Naive thymus-derived CD4-positive, alpha-beta T cell (primary cell): ENCODE measurements at regions of chr3 and their contacts with region 1.

Region 1: DNA sequence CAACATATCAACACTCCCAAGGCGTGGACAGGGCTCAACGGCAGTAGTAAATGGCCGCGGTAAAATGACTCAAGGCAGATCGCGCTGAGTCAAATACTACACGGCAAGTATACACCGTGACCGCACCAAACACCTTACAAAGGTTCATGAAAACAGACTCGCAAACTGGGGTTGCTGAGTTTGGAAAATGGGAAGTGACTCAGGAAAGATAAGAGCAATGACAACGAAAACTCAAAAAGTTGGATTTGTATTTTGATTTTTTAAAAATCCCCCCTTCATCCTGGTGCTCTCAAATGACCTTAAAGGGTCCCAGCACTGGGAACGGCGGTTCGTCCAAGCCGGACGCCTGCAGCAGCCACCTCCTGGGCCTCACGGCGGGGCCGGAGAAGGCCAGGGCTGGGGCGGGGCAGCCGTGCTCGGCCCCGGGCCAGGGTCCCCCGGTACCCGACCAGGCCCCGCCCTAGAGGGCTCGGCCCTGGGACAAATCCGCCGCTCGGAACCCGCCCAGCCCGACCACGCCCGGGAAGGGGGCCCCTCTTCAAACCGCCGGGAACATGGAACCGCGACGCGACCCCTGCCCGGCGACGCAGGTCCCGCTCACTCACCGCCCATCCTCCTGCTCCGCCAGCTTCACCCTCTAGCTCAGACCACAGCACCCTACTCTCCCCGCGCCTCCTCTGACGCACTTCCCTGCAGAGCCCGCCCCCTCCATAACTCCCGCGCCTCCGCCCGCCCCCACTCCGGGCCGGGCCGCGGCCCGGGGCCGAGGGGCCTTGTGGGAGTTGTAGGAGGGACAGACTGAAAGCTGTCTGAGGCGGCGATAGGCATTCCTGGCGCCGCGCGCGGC is at the start of gene CLDND1:
- DNase-seq: peak; percentile 88 to 94 (median 93)
- ATAC-seq: peak; percentile 99
- H3K4me3 ChIP-seq: peak within 1 kb of the TSS; percentile 68
- H3K4me3 Mint-ChIP-seq: peak within 1 kb of the TSS; percentile 83 to 99 (median 92)
- H3K27ac ChIP-seq: peak within 1 kb of the TSS; percentile 90
- H3K27ac Mint-ChIP-seq: peak within 1 kb of the TSS; percentile 67 to 99 (median 96)
- H3K4me1 ChIP-seq: peaks cover 16 to 27% of the 10 kb centered on the region in 2 donors
- H3K4me1 Mint-ChIP-seq: peaks cover 31 to 62% (median 53%) of the 10 kb centered on the region in 7 donors
- H3K27me3 ChIP-seq: no peaks in the 10 kb centered on the region
- H3K27me3 Mint-ChIP-seq: no peaks in the 10 kb centered on the region
- total RNA-seq, gene CLDND1: 100 to 478 (median 132) TPM

Region 2: DNA sequence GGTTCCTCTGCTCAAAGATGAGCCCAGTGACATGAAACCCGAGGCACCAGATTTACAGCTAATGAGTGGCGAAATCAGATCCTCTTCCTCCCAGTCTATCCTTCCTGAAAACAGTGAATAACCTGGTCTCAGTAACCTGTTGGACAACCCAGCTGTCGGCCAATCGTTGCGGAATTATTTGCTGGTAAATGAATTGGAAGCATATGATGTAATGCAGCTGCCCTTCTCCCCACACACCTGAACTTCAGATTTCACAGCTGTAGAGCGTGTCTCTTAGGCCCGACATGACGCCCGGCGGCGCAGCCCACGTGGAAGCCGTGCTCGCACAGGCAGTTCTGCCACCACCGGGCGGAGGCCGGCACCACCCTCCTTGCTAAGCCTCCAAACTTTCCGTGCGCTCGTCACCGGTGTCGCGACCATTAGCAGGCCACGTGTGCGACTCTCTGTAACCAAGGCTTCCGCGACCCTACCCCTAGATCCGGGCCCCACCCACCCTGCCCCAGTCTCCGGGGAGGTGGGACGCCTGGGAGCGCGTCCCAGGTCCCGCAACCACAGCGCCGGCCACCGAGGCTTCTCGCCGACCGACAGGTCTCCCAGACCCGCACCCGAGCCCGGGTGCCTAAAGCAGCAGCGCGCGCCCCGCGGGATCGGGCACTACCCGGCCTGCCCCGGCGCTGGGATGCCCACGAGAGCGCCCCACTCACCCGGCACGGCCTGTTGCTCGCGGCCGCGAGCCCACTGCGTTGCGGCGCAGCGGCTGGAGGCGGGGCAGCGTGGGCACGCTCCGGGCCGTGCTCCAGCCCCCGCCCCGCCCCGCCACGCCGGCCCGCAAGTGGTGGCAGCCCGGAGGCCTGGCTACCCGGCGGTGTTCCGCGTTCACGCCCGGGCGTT is 550.5 kb before region 1 on chr3 and contains the start of gene RIOX2:
- CTCF ChIA-PET with region 1: no interaction called
- POLR2A ChIA-PET with region 1: no interaction called
- intact Hi-C with region 1: loop called in 1 of 2 experiments (anchors 2 kb)
- DNase-seq: peak; percentile 62 to 82 (median 77)
- ATAC-seq: peak; percentile 94
- H3K4me3 ChIP-seq: peak within 1 kb of the TSS; percentile 57
- H3K4me3 Mint-ChIP-seq: peak within 1 kb of the TSS; percentile 78 to 97 (median 93)
- H3K27ac ChIP-seq: peak within 1 kb of the TSS; percentile 74
- H3K27ac Mint-ChIP-seq: peak within 1 kb of the TSS; percentile 84 to 96 (median 90)
- H3K4me1 ChIP-seq: peaks cover 9 to 24% of the 10 kb centered on the region in 2 donors
- H3K4me1 Mint-ChIP-seq: peaks cover 42 to 85% (median 70%) of the 10 kb centered on the region in 7 donors
- H3K27me3 ChIP-seq: no peaks in the 10 kb centered on the region
- H3K27me3 Mint-ChIP-seq: no peaks in the 10 kb centered on the region
- total RNA-seq, gene RIOX2: 17.8 to 110 (median 28.4) TPM

Region 3: GRCh38 chr3:98540346-98540745 is 17.9 kb after region 1 on chr3:
- CTCF ChIA-PET with region 1: no interaction called
- POLR2A ChIA-PET with region 1: interaction called, 4 read pairs
- intact Hi-C with region 1: loop called in 1 of 2 experiments (anchors 1 kb)
- DNase-seq: no peak
- ATAC-seq: no peak
- H3K4me3 ChIP-seq: no peak overlapping the region
- H3K4me3 Mint-ChIP-seq: peak overlapping the region in 1 of 10 donors; percentile 49
- H3K27ac ChIP-seq: no peak overlapping the region
- H3K27ac Mint-ChIP-seq: peak overlapping the region in 1 of 9 donors; percentile 75
- H3K4me1 ChIP-seq: peaks cover 0 to 12% of the 10 kb centered on the region in 2 donors
- H3K4me1 Mint-ChIP-seq: peaks cover 0 to 64% (median 0%) of the 10 kb centered on the region in 7 donors
- H3K27me3 ChIP-seq: no peaks in the 10 kb centered on the region
- H3K27me3 Mint-ChIP-seq: no peaks in the 10 kb centered on the region

Region 4: DNA sequence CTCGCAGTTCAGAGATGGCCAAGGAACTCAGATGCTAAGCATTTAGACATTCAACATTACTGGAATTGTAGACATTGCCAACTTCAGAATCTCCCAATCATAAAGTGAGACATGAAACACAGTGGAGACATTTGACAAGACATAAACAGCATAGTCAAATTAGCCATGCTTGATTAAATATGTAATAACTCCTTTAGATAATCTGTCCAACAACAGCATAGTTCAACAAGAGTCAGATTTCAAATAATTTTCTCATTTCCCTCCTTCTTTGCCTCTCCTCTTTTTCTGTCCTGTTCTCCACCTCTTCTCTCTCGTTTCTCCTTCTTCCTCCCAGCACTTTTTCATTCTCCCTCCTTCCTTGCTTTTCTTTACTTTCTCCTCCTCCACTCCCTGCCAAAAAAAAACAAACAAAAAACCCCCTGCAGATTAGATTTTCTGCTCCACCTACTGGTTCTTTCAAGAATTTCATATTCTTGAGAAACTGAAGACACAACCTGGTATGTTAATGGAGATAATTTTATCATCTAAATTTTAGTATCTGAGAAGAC is 50.8 kb after region 1 on chr3:
- CTCF ChIA-PET with region 1: no interaction called
- POLR2A ChIA-PET with region 1: interaction called, 7 read pairs
- intact Hi-C with region 1: loop called in 1 of 2 experiments (anchors 1 kb)
- DNase-seq: peak in 1 of 9 donors; percentile 17
- ATAC-seq: peak; percentile 45
- H3K4me3 ChIP-seq: no peak overlapping the region
- H3K4me3 Mint-ChIP-seq: peak overlapping the region in 1 of 10 donors; percentile 59
- H3K27ac ChIP-seq: no peak overlapping the region
- H3K27ac Mint-ChIP-seq: peak overlapping the region in 5 of 9 donors; percentile 2 to 80 (median 65)
- H3K4me1 ChIP-seq: peaks cover 0 to 13% of the 10 kb centered on the region in 2 donors
- H3K4me1 Mint-ChIP-seq: peaks cover 4 to 58% (median 11%) of the 10 kb centered on the region in 7 donors
- H3K27me3 ChIP-seq: no peaks in the 10 kb centered on the region
- H3K27me3 Mint-ChIP-seq: no peaks in the 10 kb centered on the region

Region 5: GRCh38 chr3:100047455-100048141 is 1525.1 kb after region 1 on chr3:
- CTCF ChIA-PET with region 1: no interaction called
- POLR2A ChIA-PET with region 1: no interaction called
- intact Hi-C with region 1: no loop called
- DNase-seq: no peak
- ATAC-seq: peak; percentile 71
- H3K4me3 ChIP-seq: no peak overlapping the region
- H3K4me3 Mint-ChIP-seq: no peak overlapping the region
- H3K27ac ChIP-seq: no peak overlapping the region
- H3K27ac Mint-ChIP-seq: no peak overlapping the region
- H3K4me1 ChIP-seq: no peaks in the 10 kb centered on the region
- H3K4me1 Mint-ChIP-seq: peaks cover 0 to 11% (median 0%) of the 10 kb centered on the region in 7 donors
- H3K27me3 ChIP-seq: no peaks in the 10 kb centered on the region
- H3K27me3 Mint-ChIP-seq: no peaks in the 10 kb centered on the region

Region 6: GRCh38 chr3:100260685-100261484 is 1738.4 kb after region 1 on chr3 and contains the start of gene TBC1D23:
- CTCF ChIA-PET with region 1: no interaction called
- POLR2A ChIA-PET with region 1: no interaction called
- intact Hi-C with region 1: loop called (anchors 1 to 10 kb)
- DNase-seq: peak; percentile 89 to 98 (median 96)
- ATAC-seq: peak; percentile 99
- H3K4me3 ChIP-seq: peak within 1 kb of the TSS; percentile 92
- H3K4me3 Mint-ChIP-seq: peak within 1 kb of the TSS; percentile 90 to 100 (median 94)
- H3K27ac ChIP-seq: peak within 1 kb of the TSS; percentile 89
- H3K27ac Mint-ChIP-seq: peak within 1 kb of the TSS; percentile 97 to 100 (median 99)
- H3K4me1 ChIP-seq: peaks cover 10 to 20% of the 10 kb centered on the region in 2 donors
- H3K4me1 Mint-ChIP-seq: peaks cover 37 to 75% (median 65%) of the 10 kb centered on the region in 7 donors
- H3K27me3 ChIP-seq: no peaks in the 10 kb centered on the region
- H3K27me3 Mint-ChIP-seq: no peaks in the 10 kb centered on the region
- total RNA-seq, gene TBC1D23: 30.8 to 42.4 (median 33.9) TPM